ENCODE measurements at regions of chr10 and their contacts with region 1.

Region 1: DNA sequence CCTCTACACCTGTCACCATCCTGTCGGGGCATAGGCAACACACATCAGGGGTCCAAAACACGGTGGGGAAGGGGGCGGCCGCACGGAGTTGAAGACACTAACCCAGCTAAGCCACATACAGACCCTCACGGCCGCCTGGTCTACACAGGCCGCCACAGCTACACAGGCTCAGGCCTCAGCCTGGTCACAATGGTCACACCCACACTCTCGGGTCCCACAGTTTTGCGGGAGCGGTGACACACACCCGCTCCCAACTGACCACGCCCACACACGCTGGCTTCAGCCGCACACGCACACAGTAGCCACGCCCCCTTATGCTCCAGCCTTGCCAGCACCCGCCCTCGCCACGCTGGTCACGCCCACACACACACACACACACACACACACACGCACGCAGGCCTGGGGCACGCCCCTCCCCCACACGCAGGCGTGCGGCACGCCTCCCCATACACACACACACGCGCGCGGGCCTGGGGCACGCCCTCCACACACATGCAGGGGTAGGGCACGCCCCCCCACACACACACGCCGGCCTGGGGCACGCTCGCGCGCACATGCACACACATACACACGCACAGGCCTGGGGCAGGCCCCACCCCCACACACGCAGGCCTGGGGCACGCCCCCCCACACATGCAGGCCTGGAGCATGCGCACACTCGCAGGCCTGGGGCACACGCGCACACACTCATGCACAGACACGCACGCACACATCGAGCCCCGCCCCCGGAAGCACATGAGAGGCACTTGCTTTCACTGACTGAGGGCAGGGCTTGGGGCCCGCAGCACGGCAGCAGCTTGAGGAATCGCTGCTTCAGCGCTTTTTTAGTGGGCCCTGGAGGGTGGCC is 12.3 kb upstream of the OGA start:
- DNase-seq: peak; percentile 91
- H3K4me3 ChIP-seq: peak overlapping the region in 2 of 3 experiments; percentile 25 to 64
- H3K27ac ChIP-seq: no peak overlapping the region
- H3K4me1 ChIP-seq: peaks cover 11% of the 10 kb centered on the region
- H3K27me3 ChIP-seq: no peaks in the 10 kb centered on the region
- CTCF ChIP-seq: no peak
- POLR2A ChIP-seq: no peak

Region 2: GRCh38 chr10:101818119-101818871 is 12.2 kb before region 1 on chr10 and contains the start of gene OGA:
- CTCF ChIA-PET with region 1: interaction called, 25 read pairs
- POLR2A ChIA-PET with region 1: interaction called, 3 read pairs
- dilution Hi-C with region 1: no loop called
- intact Hi-C with region 1: loop called (anchors 1 kb)
- DNase-seq: peak; percentile 100
- H3K4me3 ChIP-seq: peak within 1 kb of the TSS; percentile 82 to 99 (median 90)
- H3K27ac ChIP-seq: peak within 1 kb of the TSS; percentile 83
- H3K4me1 ChIP-seq: peaks cover 19% of the 10 kb centered on the region
- H3K27me3 ChIP-seq: no peaks in the 10 kb centered on the region
- CTCF ChIP-seq: no peak
- POLR2A ChIP-seq: peak; percentile 87
- total RNA-seq, gene OGA: 113 and 118 TPM in 2 replicates

Region 3: GRCh38 chr10:101848894-101849351 is 18.4 kb after region 1 on chr10:
- CTCF ChIA-PET with region 1: interaction called, 19 read pairs
- POLR2A ChIA-PET with region 1: no interaction called
- dilution Hi-C with region 1: no loop called
- intact Hi-C with region 1: no loop called
- DNase-seq: no peak
- H3K4me3 ChIP-seq: no peak overlapping the region
- H3K27ac ChIP-seq: peak overlapping the region; percentile 71
- H3K4me1 ChIP-seq: peaks cover 26% of the 10 kb centered on the region
- H3K27me3 ChIP-seq: no peaks in the 10 kb centered on the region
- CTCF ChIP-seq: no peak
- POLR2A ChIP-seq: no peak

Region 4: GRCh38 chr10:102033787-102034186 is 203.2 kb after region 1 on chr10:
- CTCF ChIA-PET with region 1: no interaction called
- POLR2A ChIA-PET with region 1: no interaction called
- dilution Hi-C with region 1: no loop called
- intact Hi-C with region 1: no loop called
- DNase-seq: no peak
- H3K4me3 ChIP-seq: no peak overlapping the region
- H3K27ac ChIP-seq: no peak overlapping the region
- H3K4me1 ChIP-seq: no peaks in the 10 kb centered on the region
- H3K27me3 ChIP-seq: no peaks in the 10 kb centered on the region
- CTCF ChIP-seq: no peak
- POLR2A ChIP-seq: no peak

Region 5: GRCh38 chr10:102072673-102073527 is 242.4 kb after region 1 on chr10:
- CTCF ChIA-PET with region 1: interaction called, 36 read pairs
- POLR2A ChIA-PET with region 1: no interaction called
- dilution Hi-C with region 1: no loop called
- intact Hi-C with region 1: no loop called
- DNase-seq: peak; percentile 81
- H3K4me3 ChIP-seq: no peak overlapping the region
- H3K27ac ChIP-seq: no peak overlapping the region
- H3K4me1 ChIP-seq: no peaks in the 10 kb centered on the region
- H3K27me3 ChIP-seq: peaks cover 0 to 2% of the 10 kb centered on the region in 2 experiments
- CTCF ChIP-seq: peak; percentile 91 to 98
- POLR2A ChIP-seq: no peak

Region 6: GRCh38 chr10:102998005-102998404 is 1167.5 kb after region 1 on chr10:
- CTCF ChIA-PET with region 1: no interaction called
- POLR2A ChIA-PET with region 1: no interaction called
- dilution Hi-C with region 1: no loop called
- intact Hi-C with region 1: no loop called
- DNase-seq: no peak
- H3K4me3 ChIP-seq: no peak overlapping the region
- H3K27ac ChIP-seq: no peak overlapping the region
- H3K4me1 ChIP-seq: no peaks in the 10 kb centered on the region
- H3K27me3 ChIP-seq: no peaks in the 10 kb centered on the region
- CTCF ChIP-seq: no peak
- POLR2A ChIP-seq: no peak

Measured in endothelial cell of umbilical vein (primary cell).